ENCODE measurements at regions of chrX and their contacts with region 1.

Region 1: GRCh38 chrX:2894885-2895292 is 34.2 kb downstream of the ARSD start:
- DNase-seq: peak in 1 of 4 experiments; percentile 29
- ATAC-seq: no peak
- H3K4me3 ChIP-seq: no peak overlapping the region
- H3K27ac ChIP-seq: no peak overlapping the region
- H3K4me1 ChIP-seq: peaks cover 14 to 31% of the 10 kb centered on the region in 2 experiments; a peak in 4 of 5 replicates
- H3K27me3 ChIP-seq: no peaks in the 10 kb centered on the region
- CTCF ChIP-seq: no peak
- EP300 ChIP-seq: no peak
- POLR2A ChIP-seq: no peak
- RAD21 ChIP-seq: no peak

Region 2: DNA sequence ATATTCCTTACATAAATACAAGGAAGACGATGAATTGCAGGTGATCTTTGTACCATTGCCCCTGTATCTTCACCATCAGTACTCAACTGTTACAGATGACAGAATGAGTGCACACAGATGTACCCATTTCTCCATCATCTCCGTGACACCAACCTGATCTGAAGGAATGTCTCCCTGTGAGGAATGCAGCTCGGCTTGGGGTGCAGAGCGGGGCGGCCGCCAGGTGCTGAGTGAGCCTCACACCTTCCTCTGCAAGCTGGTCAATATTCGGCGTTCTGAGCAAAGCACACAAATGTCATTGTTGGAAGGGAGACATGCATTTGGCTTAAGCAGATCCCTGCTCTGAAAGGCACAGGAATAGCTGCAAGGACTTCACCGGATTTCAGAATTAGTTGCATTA is 26.9 kb after region 1 on chrX:
- CTCF ChIA-PET with region 1: no interaction called
- POLR2A ChIA-PET with region 1: no interaction called
- in situ Hi-C with region 1: no loop called
- intact Hi-C with region 1: loop called (anchors 2 kb)
- DNase-seq: no peak
- ATAC-seq: no peak
- H3K4me3 ChIP-seq: no peak overlapping the region
- H3K27ac ChIP-seq: no peak overlapping the region
- H3K4me1 ChIP-seq: peaks cover 7 to 18% of the 10 kb centered on the region in 2 experiments; a peak in 4 of 5 replicates
- H3K27me3 ChIP-seq: no peaks in the 10 kb centered on the region
- CTCF ChIP-seq: no peak
- EP300 ChIP-seq: no peak
- POLR2A ChIP-seq: no peak
- RAD21 ChIP-seq: no peak

Region 3: GRCh38 chrX:3145716-3146115 is 250.8 kb after region 1 on chrX:
- CTCF ChIA-PET with region 1: no interaction called
- POLR2A ChIA-PET with region 1: no interaction called
- in situ Hi-C with region 1: no loop called
- intact Hi-C with region 1: no loop called
- DNase-seq: no peak
- ATAC-seq: no peak
- H3K4me3 ChIP-seq: no peak overlapping the region
- H3K27ac ChIP-seq: no peak overlapping the region
- H3K4me1 ChIP-seq: no peaks in the 10 kb centered on the region
- H3K27me3 ChIP-seq: no peaks in the 10 kb centered on the region; a peak in 1 of 5 replicates
- CTCF ChIP-seq: no peak
- EP300 ChIP-seq: no peak
- POLR2A ChIP-seq: no peak
- RAD21 ChIP-seq: no peak

Measured in K562 (cell line).